ENCODE measurements at regions of chr1 and their contacts with region 1.

Region 1: GRCh38 chr1:110011527-110012041 is 22.8 kb upstream of the STRIP1 start:
- DNase-seq: peak; percentile 35
- H3K4me3 Mint-ChIP-seq: no peak overlapping the region
- H3K27ac Mint-ChIP-seq: no peak overlapping the region
- H3K4me1 Mint-ChIP-seq: peaks cover 5% of the 10 kb centered on the region
- H3K27me3 Mint-ChIP-seq: no peaks in the 10 kb centered on the region

Region 2: DNA sequence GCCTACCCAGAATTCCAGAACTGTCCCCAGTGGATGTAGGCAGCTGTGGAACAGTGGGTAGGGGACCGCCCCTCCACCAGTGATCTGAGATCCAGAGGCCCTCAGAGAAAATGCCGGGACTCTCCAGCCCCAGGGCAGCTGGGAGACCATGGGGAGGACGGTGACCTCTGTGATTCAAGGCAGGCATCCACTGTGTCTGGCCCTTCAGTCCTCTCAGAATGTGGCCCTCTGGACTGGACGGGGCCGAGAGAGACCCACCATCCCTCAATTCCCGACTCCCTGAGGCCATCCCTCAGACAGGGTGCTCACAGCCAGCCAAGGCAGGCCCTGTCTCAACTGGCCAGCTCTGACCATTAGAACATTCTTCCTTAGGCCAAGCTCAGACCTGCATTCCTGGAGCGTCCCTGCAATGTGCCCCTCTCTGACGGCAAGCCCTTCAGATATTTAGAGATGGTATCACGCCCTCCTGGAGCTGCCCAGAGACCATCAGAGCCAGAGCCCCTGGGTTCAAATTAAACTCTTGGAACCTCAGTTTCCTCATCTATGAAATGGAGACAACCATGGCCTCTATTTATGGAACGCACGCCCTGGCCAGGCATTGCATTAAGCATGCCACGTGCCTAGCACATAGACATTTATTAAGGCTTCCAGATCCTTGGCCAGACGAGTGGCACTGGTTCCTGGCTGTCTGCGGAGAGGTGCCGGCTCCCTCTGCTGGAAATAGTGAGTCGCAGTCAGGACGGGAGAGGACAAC is 238.3 kb before region 1 on chr1:
- intact Hi-C with region 1: loop called (anchors 1 kb)
- DNase-seq: peak; percentile 65
- H3K4me3 Mint-ChIP-seq: no peak overlapping the region
- H3K27ac Mint-ChIP-seq: peak overlapping the region; percentile 15
- H3K4me1 Mint-ChIP-seq: peaks cover 23% of the 10 kb centered on the region
- H3K27me3 Mint-ChIP-seq: peaks cover 9% of the 10 kb centered on the region